PC-9 (cell line): ENCODE measurements at regions of chr10 and their contacts with region 1.

Region 1: GRCh38 chr10:6498771-6499170 is 81.3 kb downstream of the PRKCQ start:
- DNase-seq: no peak
- H3K4me3 ChIP-seq: no peak overlapping the region
- H3K27ac ChIP-seq: no peak overlapping the region
- H3K4me1 ChIP-seq: peaks cover 4% of the 10 kb centered on the region; the same call in 1 of the 2 replicates
- H3K27me3 ChIP-seq: no peaks in the 10 kb centered on the region
- CTCF ChIP-seq: no peak

Region 2: DNA sequence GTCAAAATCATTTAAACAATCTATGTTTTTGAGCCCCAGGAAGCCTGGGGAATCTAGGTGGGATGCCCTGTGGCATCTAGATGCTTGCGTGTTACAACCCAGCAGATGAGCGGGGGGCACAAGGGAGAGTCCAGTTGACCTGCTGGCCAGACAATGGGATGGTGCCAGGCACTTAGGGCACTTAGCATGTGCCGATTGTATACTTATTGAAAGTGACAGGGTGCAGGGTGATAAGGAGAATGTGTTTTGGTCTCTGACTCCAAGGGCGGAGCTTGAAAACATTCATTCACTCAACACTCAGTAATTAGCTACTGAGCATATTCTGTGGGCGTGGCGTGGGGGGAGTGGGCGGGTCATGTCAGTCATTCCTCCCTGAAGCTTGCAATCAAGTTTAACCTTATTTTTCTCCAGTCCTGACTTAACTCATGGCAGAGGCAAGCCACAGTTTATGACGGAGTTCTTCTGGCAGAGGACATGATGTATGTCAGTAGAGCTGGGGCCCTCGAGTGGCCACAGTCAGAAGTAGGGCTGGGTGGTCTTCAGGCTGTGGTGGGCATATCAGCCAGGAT is 33.8 kb before region 1 on chr10:
- CTCF ChIA-PET with region 1: no interaction called
- POLR2A ChIA-PET with region 1: no interaction called
- intact Hi-C with region 1: loop called (anchors 1 kb)
- DNase-seq: no peak
- H3K4me3 ChIP-seq: no peak overlapping the region
- H3K27ac ChIP-seq: no peak overlapping the region
- H3K4me1 ChIP-seq: no peaks in the 10 kb centered on the region
- H3K27me3 ChIP-seq: no peaks in the 10 kb centered on the region
- CTCF ChIP-seq: no peak

Region 3: DNA sequence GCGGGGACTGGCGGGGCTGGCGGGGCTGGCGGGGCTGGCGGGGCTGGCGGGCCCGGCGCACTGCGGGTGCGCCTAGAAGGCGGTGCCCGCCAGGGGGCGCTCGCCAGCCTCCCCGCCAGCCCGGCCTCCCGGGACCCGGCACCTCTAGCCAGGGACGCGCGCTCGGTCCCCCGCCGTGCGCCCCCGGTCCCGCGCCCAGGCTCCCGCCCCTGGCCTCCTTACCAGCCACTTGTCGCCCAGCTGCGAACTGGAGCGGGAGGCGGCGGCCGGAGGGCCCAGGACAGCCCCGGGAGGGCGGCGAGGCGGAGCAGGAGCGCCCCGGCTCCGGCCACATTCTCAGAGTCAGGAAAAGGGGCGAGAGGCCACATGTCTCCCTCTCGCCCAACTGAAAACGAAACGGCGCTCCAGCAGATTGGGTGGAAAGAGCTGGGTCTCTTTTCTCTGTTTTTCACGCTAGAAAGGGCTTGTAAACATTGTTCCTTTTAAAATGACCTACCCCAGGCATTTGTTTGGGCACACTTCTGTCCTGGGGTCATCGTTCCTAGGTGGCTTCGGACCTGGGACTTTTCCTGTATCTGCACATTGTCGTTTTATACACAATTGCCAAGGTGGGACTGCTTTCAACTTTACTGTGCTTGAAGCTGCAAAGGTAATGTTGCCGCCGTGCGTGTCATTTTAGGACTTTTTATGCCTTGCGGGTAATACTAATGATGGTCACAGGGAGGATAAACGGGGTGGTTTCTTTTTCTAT is 81.7 kb after region 1 on chr10:
- CTCF ChIA-PET with region 1: no interaction called
- POLR2A ChIA-PET with region 1: no interaction called
- intact Hi-C with region 1: loop called (anchors 2 kb)
- DNase-seq: peak; percentile 45 to 83
- H3K4me3 ChIP-seq: peak overlapping the region; percentile 63
- H3K27ac ChIP-seq: peak overlapping the region; percentile 50
- H3K4me1 ChIP-seq: no peaks in the 10 kb centered on the region
- H3K27me3 ChIP-seq: no peaks in the 10 kb centered on the region
- CTCF ChIP-seq: no peak; the same call in 1 of the 2 replicates

Region 4: DNA sequence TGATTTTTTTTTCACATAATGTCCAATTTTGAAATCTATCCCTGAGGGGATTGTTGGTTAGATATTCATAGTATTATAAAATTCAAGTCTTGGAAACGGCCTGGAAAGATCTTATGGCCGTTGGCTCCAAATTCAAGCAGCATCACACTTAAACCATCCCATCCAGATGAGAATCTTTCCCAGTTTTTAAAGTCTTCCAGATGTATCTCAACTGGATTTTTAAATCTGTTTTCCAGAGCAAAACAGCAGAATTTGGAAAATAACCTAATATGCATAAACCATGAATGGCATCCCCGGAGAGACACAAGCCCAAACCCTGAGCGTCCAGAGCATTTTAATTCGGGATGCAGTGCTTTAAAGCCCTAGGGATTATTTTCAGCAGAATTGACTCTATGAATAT is 289.5 kb after region 1 on chr10:
- CTCF ChIA-PET with region 1: no interaction called
- POLR2A ChIA-PET with region 1: no interaction called
- intact Hi-C with region 1: no loop called
- DNase-seq: no peak
- H3K4me3 ChIP-seq: no peak overlapping the region
- H3K27ac ChIP-seq: no peak overlapping the region
- H3K4me1 ChIP-seq: no peaks in the 10 kb centered on the region
- H3K27me3 ChIP-seq: no peaks in the 10 kb centered on the region
- CTCF ChIP-seq: no peak